ENCODE measurements at regions of chr1 and their contacts with region 1.

Region 1: GRCh38 chr1:51627678-51628077 is 10.8 kb downstream of the OSBPL9 start:
- H3K4me3 ChIP-seq: no peak overlapping the region
- H3K27ac ChIP-seq: no peak overlapping the region
- H3K4me1 ChIP-seq: peaks cover 11% of the 10 kb centered on the region
- CTCF ChIP-seq: no peak; the same call in 1 of the 2 replicates

Region 2: GRCh38 chr1:51255331-51255730 is 372.3 kb before region 1 on chr1:
- CTCF ChIA-PET with region 1: interaction called, 10 read pairs
- POLR2A ChIA-PET with region 1: no interaction called
- H3K4me3 ChIP-seq: no peak overlapping the region
- H3K27ac ChIP-seq: no peak overlapping the region
- H3K4me1 ChIP-seq: peaks cover 2% of the 10 kb centered on the region; the same call in 1 of the 2 replicates
- CTCF ChIP-seq: no peak

Region 3: GRCh38 chr1:51638350-51638749 is 10.7 kb after region 1 on chr1:
- CTCF ChIA-PET with region 1: interaction called, 11 read pairs
- POLR2A ChIA-PET with region 1: no interaction called
- H3K4me3 ChIP-seq: no peak overlapping the region
- H3K27ac ChIP-seq: no peak overlapping the region
- H3K4me1 ChIP-seq: peaks cover 4% of the 10 kb centered on the region; the same call in 1 of the 2 replicates
- CTCF ChIP-seq: no peak

Measured in HEK293 (cell line).